Endothelial cell of umbilical vein (primary cell): ENCODE measurements at regions of chr15 and their contacts with region 1.

Region 1: DNA sequence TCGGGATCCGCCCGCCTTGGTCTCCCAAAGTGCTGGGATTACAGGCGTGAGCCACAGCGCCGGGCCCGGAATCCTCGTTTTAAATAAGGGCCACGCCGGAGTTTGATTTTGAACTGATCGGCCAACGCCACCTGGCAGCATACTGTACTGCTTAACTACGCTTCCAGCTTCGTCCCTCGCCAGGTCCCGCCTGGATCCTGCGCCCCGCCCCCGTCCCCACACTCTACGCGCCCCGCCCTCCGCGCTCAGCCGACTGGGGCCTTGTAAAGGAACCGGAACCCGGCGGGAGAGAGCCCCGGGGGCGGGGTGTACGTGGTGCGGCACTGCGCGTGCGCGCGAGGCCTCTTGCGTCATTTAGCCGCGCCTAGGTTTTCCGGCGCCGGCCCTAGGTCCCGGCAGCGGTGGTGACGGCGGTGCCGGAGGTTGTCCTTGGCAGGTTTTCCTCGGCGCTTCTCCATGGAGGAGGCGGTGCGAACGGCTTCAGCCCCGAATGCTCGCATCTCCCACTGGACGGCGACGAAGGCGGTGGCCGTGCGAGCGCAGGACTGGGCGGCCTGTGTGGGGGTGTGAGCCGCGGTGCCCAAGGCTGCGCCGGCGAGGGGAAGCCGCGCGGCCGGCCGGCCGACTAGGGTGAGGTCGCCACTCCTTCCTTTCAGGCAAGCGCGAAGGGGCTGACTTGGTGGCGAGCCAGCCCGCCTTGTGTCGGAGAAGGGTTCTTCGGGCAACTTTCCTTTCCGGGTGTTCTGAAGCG is at the start of gene NIPA2:
- DNase-seq: peak; percentile 99
- H3K4me3 ChIP-seq: peak within 1 kb of the TSS; percentile 69 to 98 (median 87)
- H3K27ac ChIP-seq: peak within 1 kb of the TSS; percentile 92
- H3K4me1 ChIP-seq: peaks cover 15% of the 10 kb centered on the region
- H3K27me3 ChIP-seq: no peaks in the 10 kb centered on the region
- CTCF ChIP-seq: peak in 1 of 2 donors; percentile 12
- POLR2A ChIP-seq: peak; percentile 66
- total RNA-seq, gene NIPA2: 72.9 and 75.7 TPM in 2 replicates

Region 2: DNA sequence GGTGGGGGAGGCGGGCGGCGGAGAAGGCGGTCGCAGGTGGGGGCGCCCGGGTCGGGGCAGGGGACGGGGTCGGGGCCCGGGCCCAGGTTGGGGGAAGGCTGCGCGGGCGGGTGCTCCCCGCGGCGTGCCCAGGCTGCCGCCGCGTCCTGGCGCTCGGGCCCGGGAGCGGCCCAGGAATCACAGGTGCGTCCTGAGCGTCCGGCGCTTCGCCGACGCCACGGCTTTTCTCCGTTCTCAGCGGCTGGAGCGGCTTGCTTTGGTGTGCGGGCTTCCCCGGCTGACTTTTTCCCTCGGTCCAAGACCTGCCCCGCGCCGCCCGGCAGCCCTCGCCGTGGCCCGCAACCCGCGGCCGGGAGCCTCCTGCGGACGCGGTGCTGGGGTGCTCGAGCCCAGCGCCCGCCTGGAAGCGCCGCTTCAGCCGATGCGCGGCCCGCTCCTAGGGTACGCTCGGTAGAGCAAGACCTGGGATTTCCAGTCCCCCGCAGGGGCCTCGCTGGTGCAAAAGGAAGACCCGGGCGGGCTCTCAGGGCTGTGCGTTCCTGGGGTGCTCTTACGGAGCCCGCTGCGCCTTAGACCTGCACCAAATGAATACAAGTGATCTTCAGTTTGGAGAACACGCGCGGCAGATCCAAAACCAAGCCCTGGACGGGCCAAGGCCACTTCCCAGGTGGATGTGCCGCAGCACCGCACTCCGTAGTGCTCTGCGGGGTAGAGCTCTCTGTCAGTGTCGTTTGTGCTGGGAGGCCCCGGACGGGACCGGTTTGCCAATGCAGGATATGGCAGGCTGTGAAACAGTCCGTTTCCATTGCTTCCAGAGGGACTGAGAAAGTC is 51.4 kb before region 1 on chr15:
- CTCF ChIA-PET with region 1: interaction called, 3 read pairs
- POLR2A ChIA-PET with region 1: interaction called, 4 read pairs
- dilution Hi-C with region 1: no loop called
- intact Hi-C with region 1: loop called (anchors 1 kb)
- DNase-seq: peak; percentile 37
- H3K4me3 ChIP-seq: peak overlapping the region; percentile 43 to 61 (median 48)
- H3K27ac ChIP-seq: no peak overlapping the region
- H3K4me1 ChIP-seq: peaks cover 10% of the 10 kb centered on the region
- H3K27me3 ChIP-seq: no peaks in the 10 kb centered on the region
- CTCF ChIP-seq: no peak
- POLR2A ChIP-seq: no peak

Region 3: DNA sequence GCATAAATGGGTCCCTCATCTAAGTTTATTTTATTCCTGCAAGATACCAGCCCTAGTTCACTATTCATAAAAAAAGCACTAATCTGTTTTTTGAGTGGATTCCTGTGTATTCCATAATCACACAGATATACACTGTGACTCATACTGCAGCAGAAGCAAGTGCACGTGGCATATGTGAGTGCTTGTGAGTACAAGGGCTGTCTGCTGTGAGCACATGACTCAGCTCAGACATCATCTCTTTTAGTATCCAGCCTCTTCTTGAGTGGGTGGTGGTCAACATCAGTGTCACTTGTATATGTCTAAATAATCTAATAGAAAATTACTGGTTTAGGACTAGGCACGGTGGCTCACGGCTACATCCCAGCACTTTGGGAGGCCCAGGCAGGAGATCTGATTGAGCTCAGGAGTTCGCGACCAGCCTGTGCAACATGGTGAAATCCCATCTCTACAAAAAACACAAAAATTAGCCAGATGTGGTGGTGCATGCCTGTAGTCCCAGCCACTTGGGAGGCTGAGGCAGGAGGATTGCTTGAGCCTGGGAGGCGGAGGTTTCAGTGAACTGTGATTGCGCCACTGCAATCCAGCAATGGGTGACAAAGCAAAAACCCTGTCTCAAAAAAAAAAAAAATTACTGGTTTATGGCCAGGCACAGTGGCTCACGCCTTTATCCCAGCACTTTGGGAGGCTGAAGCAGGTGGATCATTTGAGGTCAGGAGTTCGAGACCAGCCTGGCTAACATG is 49.8 kb after region 1 on chr15:
- CTCF ChIA-PET with region 1: no interaction called
- POLR2A ChIA-PET with region 1: no interaction called
- dilution Hi-C with region 1: no loop called
- intact Hi-C with region 1: no loop called
- DNase-seq: peak; percentile 46
- H3K4me3 ChIP-seq: no peak overlapping the region
- H3K27ac ChIP-seq: peak overlapping the region; percentile 56
- H3K4me1 ChIP-seq: peaks cover 4% of the 10 kb centered on the region
- H3K27me3 ChIP-seq: no peaks in the 10 kb centered on the region
- CTCF ChIP-seq: no peak
- POLR2A ChIP-seq: no peak

Region 4: GRCh38 chr15:22903961-22904534 is 65.6 kb after region 1 on chr15:
- CTCF ChIA-PET with region 1: no interaction called
- POLR2A ChIA-PET with region 1: no interaction called
- dilution Hi-C with region 1: no loop called
- intact Hi-C with region 1: no loop called
- DNase-seq: no peak
- H3K4me3 ChIP-seq: no peak overlapping the region
- H3K27ac ChIP-seq: no peak overlapping the region
- H3K4me1 ChIP-seq: no peaks in the 10 kb centered on the region
- H3K27me3 ChIP-seq: no peaks in the 10 kb centered on the region
- CTCF ChIP-seq: no peak
- POLR2A ChIP-seq: no peak

Region 5: DNA sequence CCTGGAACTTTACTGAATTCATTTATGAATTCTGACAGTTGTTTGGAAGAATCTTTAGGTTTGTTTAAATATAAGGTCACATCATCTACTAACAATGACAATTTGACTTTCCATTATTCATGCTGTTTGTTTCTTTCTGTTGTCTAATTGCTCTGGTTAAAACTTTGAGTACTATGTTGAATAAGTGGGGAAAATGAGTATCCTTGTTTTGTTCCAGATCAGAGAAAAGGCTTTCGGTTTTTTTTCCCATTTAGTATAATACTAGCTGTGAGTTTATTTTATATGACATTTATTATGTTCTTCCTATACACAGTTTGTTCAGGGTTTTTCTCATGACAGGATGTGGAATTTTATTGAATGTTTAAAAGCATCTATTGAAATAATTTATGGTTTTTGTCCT is 212.2 kb after region 1 on chr15:
- CTCF ChIA-PET with region 1: no interaction called
- POLR2A ChIA-PET with region 1: no interaction called
- dilution Hi-C with region 1: no loop called
- intact Hi-C with region 1: no loop called
- DNase-seq: no peak
- H3K4me3 ChIP-seq: no peak overlapping the region
- H3K27ac ChIP-seq: no peak overlapping the region
- H3K4me1 ChIP-seq: no peaks in the 10 kb centered on the region
- H3K27me3 ChIP-seq: no peaks in the 10 kb centered on the region
- CTCF ChIP-seq: no peak
- POLR2A ChIP-seq: no peak